Gastrocnemius medialis (tissue), 4 donors: ENCODE measurements at regions of chr2 and their contacts with region 1.

Region 1: DNA sequence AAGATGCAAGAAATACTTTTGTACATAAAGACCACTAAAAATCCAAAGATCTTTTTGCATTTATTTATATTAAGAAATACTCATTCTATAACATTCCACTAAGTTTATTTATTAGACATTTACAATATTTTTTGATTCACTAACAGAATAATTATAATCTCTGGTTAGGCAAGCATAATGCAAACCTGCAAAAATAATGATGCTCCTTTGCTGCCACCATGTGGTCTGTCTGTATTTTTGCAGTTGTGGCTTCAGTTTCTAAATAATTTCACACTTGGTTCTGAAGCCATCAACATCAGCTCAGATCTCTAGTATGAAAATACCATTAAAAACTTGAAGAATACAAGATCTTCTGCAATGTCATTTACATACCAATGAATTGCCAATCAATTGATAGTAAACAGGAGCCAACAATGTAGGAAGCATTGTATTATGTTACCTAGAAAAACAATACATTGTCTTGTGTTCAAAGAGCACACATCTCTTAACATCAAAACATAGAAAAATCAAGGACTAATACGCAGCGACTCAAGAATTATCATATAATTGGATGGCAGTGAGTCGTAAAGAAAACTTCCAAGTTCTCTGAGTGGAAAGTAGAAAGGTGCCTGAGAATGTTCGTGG is 28.8 kb upstream of the WDR75 start:
- DNase-seq: no peak
- ATAC-seq: peak; percentile 60 to 82
- H3K4me3 ChIP-seq: no peak overlapping the region
- H3K27ac ChIP-seq: peak overlapping the region in 3 of 4 donors; percentile 42 to 51 (median 45)
- H3K4me1 ChIP-seq: peaks cover 7 to 12% of the 10 kb centered on the region in 2 donors
- H3K27me3 ChIP-seq: no peaks in the 10 kb centered on the region
- CTCF ChIP-seq: peak; percentile 46 to 87 (median 70)
- POLR2A ChIP-seq: no peak

Region 2: GRCh38 chr2:189142893-189143759 is 269.3 kb before region 1 on chr2:
- in situ Hi-C with region 1: no loop called
- intact Hi-C with region 1: loop called (anchors 5 kb)
- DNase-seq: no peak
- ATAC-seq: peak in 1 of 2 donors; percentile 51
- H3K4me3 ChIP-seq: no peak overlapping the region
- H3K27ac ChIP-seq: no peak overlapping the region
- H3K4me1 ChIP-seq: no peaks in the 10 kb centered on the region
- H3K27me3 ChIP-seq: no peaks in the 10 kb centered on the region
- CTCF ChIP-seq: peak; percentile 29 to 60 (median 40)
- POLR2A ChIP-seq: no peak

Region 3: DNA sequence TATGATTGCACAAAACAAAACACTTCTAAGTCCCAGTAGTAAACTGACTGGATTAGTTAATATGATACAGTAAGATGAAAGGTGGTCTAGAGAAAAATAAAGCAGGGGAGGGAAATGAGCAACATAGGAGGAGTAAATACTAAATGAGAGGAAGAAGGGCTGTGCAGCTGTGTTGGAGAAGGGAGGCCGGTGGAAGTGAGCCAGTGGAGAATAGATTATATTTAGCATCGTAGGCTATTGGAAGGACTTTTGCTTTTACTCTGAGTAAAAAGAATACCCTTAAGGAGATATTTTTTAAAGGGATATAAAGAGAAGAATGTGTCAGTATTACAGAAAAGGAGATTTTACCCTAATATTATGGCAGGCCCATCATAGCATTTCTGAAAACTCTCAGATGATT is 41.6 kb after region 1 on chr2:
- in situ Hi-C with region 1: no loop called
- intact Hi-C with region 1: no loop called
- DNase-seq: no peak
- ATAC-seq: no peak
- H3K4me3 ChIP-seq: no peak overlapping the region
- H3K27ac ChIP-seq: peak overlapping the region in 2 of 4 donors; percentile 16 to 19
- H3K4me1 ChIP-seq: peaks cover 7 to 11% of the 10 kb centered on the region in 2 donors
- H3K27me3 ChIP-seq: no peaks in the 10 kb centered on the region
- CTCF ChIP-seq: no peak
- POLR2A ChIP-seq: no peak